Right ventricle myocardium inferior (tissue), 1 donor: ENCODE measurements at regions of chr20 and their contacts with region 1.

Region 1: GRCh38 chr20:54062812-54063280 is 7.5 kb downstream of the BCAS1 start:
- DNase-seq: no peak
- ATAC-seq: peak; percentile 40

Region 2: GRCh38 chr20:53939572-53940359 is 123.1 kb before region 1 on chr20:
- intact Hi-C with region 1: loop called (anchors 5 kb)
- DNase-seq: peak; percentile 93
- ATAC-seq: peak; percentile 90